Activated naive CD4-positive, alpha-beta T cell treated with anti-CD3 and anti-CD28 coated beads for 36 hours (primary cell): ENCODE measurements at regions of chr2 and their contacts with region 1.

Region 1: DNA sequence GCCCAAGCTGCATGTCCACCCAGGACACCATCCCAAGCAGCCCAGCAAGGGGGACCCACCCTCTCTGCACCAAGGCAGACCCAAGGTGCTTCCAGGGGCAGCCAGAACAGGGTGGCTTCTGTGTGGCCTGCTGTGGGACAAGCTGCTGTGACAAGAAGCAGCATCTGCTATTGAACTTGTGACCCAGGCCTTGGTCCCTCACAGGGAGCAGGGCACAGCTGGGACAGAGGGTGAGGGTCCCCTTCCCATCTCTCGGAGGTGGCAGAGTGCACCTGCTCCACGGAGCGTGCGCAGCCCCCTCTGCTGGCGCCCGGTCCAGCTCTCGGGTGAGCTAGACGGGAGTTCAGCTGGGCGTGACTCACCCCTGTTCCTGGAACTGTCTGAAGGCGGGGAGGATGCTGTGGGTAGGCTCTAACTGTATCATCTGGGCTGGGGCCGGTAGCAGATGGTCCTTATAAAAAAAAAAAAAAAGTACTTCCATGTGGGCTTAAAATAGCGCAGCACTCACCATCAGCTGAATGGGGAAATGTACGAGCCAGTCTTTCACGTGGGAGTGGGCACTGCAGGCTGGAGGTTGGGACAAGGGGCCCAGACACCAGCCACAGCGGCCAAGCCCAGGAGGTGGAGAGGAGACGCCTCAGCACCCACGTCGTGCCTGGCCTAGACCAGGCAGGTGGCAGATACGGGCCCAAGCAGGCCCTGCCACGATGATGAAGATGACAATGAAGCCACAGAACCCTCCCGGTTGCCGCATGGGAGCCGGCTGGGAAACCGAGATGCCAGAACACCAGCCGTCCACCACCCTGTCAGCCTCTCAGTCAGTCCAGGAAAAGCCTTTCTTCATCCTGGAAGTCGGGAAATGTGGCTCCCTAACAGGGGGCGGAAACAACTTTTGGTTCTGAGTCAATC is 136.8 kb upstream of the ID2 start:
- DNase-seq: peak; percentile 97
- H3K4me3 Mint-ChIP-seq: peak overlapping the region; percentile 10
- H3K27ac Mint-ChIP-seq: peak overlapping the region; percentile 97
- H3K4me1 Mint-ChIP-seq: peaks cover 67% of the 10 kb centered on the region
- H3K27me3 Mint-ChIP-seq: no peaks in the 10 kb centered on the region

Region 2: GRCh38 chr2:7437716-7438632 is 1107.1 kb before region 1 on chr2:
- CTCF ChIA-PET with region 1: no interaction called
- intact Hi-C with region 1: loop called (anchors 2 kb)
- DNase-seq: peak; percentile 69
- H3K4me3 Mint-ChIP-seq: no peak overlapping the region
- H3K27ac Mint-ChIP-seq: peak overlapping the region; percentile 87
- H3K4me1 Mint-ChIP-seq: peaks cover 68% of the 10 kb centered on the region
- H3K27me3 Mint-ChIP-seq: no peaks in the 10 kb centered on the region

Region 3: DNA sequence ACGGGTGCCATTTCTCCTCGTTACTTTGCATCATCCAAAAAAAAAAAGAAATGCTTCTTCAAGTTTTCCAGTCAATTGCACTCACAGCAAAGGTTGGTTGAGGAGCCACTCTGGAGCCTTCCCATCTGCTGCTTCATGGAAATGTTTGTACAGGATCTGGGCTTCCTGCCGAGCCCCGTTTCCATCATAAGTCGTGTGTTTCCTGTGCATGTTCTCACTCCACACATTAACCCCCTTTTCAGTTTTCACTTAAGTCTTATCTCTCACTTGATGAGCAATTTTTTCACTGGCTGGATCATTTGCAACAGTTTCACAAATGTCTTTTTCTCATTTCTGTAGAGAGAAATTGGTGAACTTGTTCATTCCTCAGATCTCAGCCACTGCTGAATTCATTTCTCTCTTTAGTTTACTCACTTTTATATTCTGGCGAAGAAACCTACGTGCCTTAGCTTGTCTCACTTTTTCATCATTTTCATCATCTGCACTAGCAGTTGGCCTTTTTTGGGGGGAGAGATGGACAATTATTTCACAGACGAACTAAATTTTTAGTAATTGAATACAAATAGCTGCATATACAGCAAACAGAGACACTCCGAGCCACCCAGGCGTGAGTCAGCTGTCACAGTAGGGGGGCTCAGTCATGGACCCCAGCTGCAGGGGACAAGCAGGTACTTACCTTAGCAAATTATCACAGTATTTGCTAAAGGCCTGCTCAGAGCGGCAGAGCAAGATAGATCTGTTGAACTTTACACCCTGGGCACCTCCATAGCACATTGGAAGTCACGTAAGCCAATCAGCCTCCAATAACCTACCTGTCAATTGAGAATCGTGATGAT is 614.0 kb before region 1 on chr2:
- CTCF ChIA-PET with region 1: no interaction called
- intact Hi-C with region 1: loop called (anchors 2 kb)
- DNase-seq: peak; percentile 45
- H3K4me3 Mint-ChIP-seq: no peak overlapping the region
- H3K27ac Mint-ChIP-seq: peak overlapping the region; percentile 74
- H3K4me1 Mint-ChIP-seq: peaks cover 19% of the 10 kb centered on the region
- H3K27me3 Mint-ChIP-seq: no peaks in the 10 kb centered on the region

Region 4: DNA sequence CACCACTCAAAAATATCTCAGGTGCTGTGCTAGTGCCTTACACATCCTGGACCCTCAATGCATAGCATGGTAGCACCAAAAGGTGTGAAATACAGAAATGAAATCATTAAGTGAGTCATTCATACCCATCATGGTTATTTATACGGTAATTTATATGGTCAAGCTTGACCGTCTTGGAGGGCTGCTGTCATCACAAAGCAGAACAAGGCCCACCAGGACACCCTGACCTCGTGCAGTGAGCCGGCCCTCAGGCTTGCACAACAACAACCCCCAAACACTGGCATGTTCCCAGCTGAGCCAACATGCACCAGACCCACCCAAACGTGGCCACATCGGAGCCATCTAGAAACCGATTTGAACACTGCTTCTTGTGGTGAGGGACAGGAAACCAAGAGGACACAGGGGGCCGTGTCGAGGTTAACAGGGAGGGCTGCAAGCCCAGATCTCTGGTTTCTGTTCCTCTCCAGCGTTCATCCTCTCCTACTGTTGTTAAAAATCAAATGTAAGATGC is 241.7 kb before region 1 on chr2:
- CTCF ChIA-PET with region 1: no interaction called
- intact Hi-C with region 1: loop called (anchors 2 kb)
- DNase-seq: peak; percentile 69
- H3K4me3 Mint-ChIP-seq: no peak overlapping the region
- H3K27ac Mint-ChIP-seq: no peak overlapping the region
- H3K4me1 Mint-ChIP-seq: peaks cover 39% of the 10 kb centered on the region
- H3K27me3 Mint-ChIP-seq: peaks cover 5% of the 10 kb centered on the region

Region 5: GRCh38 chr2:8488001-8488738 is 56.9 kb before region 1 on chr2:
- CTCF ChIA-PET with region 1: interaction called, 4 read pairs
- intact Hi-C with region 1: loop called (anchors 1 kb)
- DNase-seq: peak; percentile 86
- H3K4me3 Mint-ChIP-seq: peak overlapping the region; percentile 59
- H3K27ac Mint-ChIP-seq: peak overlapping the region; percentile 61
- H3K4me1 Mint-ChIP-seq: peaks cover 30% of the 10 kb centered on the region
- H3K27me3 Mint-ChIP-seq: no peaks in the 10 kb centered on the region

Region 6: GRCh38 chr2:8662239-8662895 is 117.3 kb after region 1 on chr2:
- CTCF ChIA-PET with region 1: no interaction called
- intact Hi-C with region 1: loop called (anchors 5 kb)
- DNase-seq: no peak
- H3K4me3 Mint-ChIP-seq: no peak overlapping the region
- H3K27ac Mint-ChIP-seq: no peak overlapping the region
- H3K4me1 Mint-ChIP-seq: peaks cover 26% of the 10 kb centered on the region
- H3K27me3 Mint-ChIP-seq: peaks cover 5% of the 10 kb centered on the region

Region 7: DNA sequence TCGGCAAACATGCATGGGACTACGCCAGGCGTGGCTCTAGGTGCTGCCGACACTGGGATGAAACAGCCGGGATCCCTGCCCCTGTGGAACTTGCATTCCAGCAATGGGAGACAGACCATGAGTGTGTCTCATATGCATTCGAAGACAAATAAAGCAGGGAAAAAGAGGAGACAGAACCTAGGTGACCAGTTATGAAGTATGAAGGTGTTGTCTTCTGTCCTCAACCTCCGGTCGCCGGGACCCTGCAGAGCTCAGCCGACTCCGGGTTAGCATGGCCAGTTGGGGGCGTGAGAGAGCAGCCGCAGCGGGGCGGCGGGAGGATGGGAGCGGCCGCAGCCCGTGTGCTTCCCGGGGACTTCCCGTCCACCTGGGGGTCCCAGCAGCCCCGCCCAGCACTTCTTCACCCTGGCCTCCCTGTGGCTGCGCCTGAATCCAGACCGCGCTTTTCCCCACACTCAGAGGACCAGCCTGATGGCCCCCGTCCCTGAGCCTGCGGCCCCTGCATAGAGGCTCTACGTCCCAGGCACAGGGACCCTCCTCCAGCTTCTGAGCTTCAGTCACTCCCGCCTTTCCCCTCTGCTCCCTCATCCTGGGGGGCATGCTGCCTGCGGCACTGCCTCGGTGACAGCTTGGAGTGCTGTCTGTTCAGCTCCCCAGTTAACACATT is 148.2 kb after region 1 on chr2:
- CTCF ChIA-PET with region 1: no interaction called
- intact Hi-C with region 1: no loop called
- DNase-seq: peak; percentile 70
- H3K4me3 Mint-ChIP-seq: peak overlapping the region; percentile 18
- H3K27ac Mint-ChIP-seq: no peak overlapping the region
- H3K4me1 Mint-ChIP-seq: peaks cover 3% of the 10 kb centered on the region
- H3K27me3 Mint-ChIP-seq: peaks cover 22% of the 10 kb centered on the region

Region 8: DNA sequence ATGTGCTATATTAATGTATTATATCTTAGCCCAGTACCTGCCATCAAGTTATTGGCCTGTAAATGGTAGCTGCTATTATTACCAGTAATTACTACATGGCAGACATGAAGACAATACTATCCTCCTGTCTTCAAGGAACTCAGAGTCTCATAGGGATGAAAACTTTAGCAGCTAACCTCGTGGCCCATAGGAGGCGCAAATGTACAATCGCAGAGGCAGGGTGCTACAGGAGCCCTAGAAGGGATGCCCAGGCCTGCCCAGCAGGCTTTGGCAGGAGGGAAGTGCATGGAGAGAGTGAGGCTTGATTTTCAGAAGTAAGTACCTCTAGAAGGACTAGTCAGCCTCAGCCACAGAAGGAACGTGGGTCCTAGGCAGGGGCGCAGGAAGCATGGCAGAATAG is 337.1 kb after region 1 on chr2:
- CTCF ChIA-PET with region 1: no interaction called
- intact Hi-C with region 1: no loop called
- DNase-seq: peak; percentile 8
- H3K4me3 Mint-ChIP-seq: no peak overlapping the region
- H3K27ac Mint-ChIP-seq: no peak overlapping the region
- H3K4me1 Mint-ChIP-seq: no peaks in the 10 kb centered on the region
- H3K27me3 Mint-ChIP-seq: peaks cover 2% of the 10 kb centered on the region